HepG2 (cell line): ENCODE measurements at regions of chr2 and their contacts with region 1.

Region 1: GRCh38 chr2:96186562-96186961 is 22.1 kb downstream of the STARD7 start:
- DNase-seq: no peak
- ATAC-seq: no peak
- H3K4me3 ChIP-seq: no peak overlapping the region
- H3K27ac ChIP-seq: peak overlapping the region; percentile 48
- H3K4me1 ChIP-seq: peaks cover 28% of the 10 kb centered on the region
- H3K27me3 ChIP-seq: no peaks in the 10 kb centered on the region
- CTCF ChIP-seq: no peak
- EP300 ChIP-seq: no peak
- POLR2A ChIP-seq: no peak
- RAD21 ChIP-seq: no peak

Region 2: GRCh38 chr2:95505222-95505621 is 681.3 kb before region 1 on chr2:
- CTCF ChIA-PET with region 1: no interaction called
- POLR2A ChIA-PET with region 1: no interaction called
- in situ Hi-C with region 1: no loop called
- intact Hi-C with region 1: no loop called
- DNase-seq: no peak
- ATAC-seq: no peak
- H3K4me3 ChIP-seq: no peak overlapping the region
- H3K27ac ChIP-seq: no peak overlapping the region
- H3K4me1 ChIP-seq: no peaks in the 10 kb centered on the region
- H3K27me3 ChIP-seq: no peaks in the 10 kb centered on the region; a peak in 1 of 5 replicates
- CTCF ChIP-seq: no peak
- EP300 ChIP-seq: no peak
- POLR2A ChIP-seq: no peak
- RAD21 ChIP-seq: no peak

Region 3: GRCh38 chr2:96157651-96158553 is 28.7 kb before region 1 on chr2:
- CTCF ChIA-PET with region 1: no interaction called
- POLR2A ChIA-PET with region 1: no interaction called
- in situ Hi-C with region 1: no loop called
- intact Hi-C with region 1: loop called (anchors 1 kb)
- DNase-seq: no peak
- ATAC-seq: peak; percentile 13
- H3K4me3 ChIP-seq: no peak overlapping the region; a peak in 1 of 6 replicates
- H3K27ac ChIP-seq: no peak overlapping the region
- H3K4me1 ChIP-seq: peaks cover 12% of the 10 kb centered on the region
- H3K27me3 ChIP-seq: peaks cover 15 to 73% of the 10 kb centered on the region in 2 experiments
- CTCF ChIP-seq: no peak
- EP300 ChIP-seq: no peak
- POLR2A ChIP-seq: no peak
- RAD21 ChIP-seq: no peak